Sigmoid colon (tissue), 7 donors: ENCODE measurements at regions of chrX and their contacts with region 1.

Region 1: DNA sequence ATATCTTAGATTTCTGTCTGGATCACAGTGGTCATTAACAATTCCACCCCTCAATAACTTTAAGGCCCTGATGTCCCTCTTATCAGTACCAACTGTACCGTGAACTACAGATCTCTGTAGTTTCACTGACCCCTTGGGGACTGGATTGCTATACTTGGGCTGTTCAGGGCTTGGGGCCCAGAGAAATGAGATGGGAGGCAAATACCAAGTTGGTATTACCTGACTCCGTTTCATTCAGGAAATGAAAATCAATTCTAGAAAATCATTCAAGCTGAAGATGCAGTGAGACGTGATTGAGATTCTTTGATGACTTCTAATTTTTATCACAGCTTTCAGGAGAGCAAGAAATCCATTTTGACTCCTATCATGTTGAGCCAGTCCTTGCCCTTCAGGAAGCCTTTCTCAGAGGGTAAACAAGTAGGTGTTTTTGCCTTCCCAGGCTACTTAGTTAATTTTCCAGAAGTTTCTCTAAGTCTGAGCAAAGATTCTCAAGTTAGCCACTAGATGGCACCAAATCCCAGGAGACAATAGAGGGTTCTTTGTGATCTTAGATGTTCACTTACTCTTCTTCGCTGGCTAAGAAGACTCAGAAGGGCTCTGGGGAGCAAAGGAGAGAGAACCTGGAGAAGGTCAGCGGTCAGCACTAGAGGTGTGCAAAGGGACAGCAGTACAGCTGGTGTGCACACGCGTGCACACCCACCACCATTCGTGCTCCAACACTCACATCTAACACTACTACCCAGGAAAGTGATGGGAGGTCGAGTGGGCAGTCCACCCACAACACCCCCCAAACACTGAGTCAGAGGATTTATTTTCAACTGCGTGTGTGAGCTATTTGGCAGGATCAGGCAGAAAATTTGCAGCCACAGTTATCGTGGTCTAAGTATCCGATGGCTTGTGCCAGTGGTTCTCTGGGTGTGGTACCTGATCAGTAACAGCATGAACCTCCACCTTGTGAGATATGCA is 7.4 kb downstream of the HNRNPH2 start:
- DNase-seq: no peak
- H3K4me3 ChIP-seq: no peak overlapping the region
- H3K27ac ChIP-seq: peak overlapping the region; percentile 50 to 91 (median 88)
- H3K4me1 ChIP-seq: peaks cover 0 to 63% (median 20%) of the 10 kb centered on the region in 4 donors
- H3K27me3 ChIP-seq: no peaks in the 10 kb centered on the region
- CTCF ChIP-seq: peak; percentile 23 to 62 (median 45)
- EP300 ChIP-seq: no peak
- POLR2A ChIP-seq: no peak

Region 2: GRCh38 chrX:100395781-100396180 is 1019.7 kb before region 1 on chrX:
- intact Hi-C with region 1: no loop called
- DNase-seq: no peak
- H3K4me3 ChIP-seq: no peak overlapping the region
- H3K27ac ChIP-seq: no peak overlapping the region
- H3K4me1 ChIP-seq: no peaks in the 10 kb centered on the region
- H3K27me3 ChIP-seq: peaks cover 0 to 3% (median 0%) of the 10 kb centered on the region in 3 donors
- CTCF ChIP-seq: no peak
- EP300 ChIP-seq: no peak
- POLR2A ChIP-seq: no peak

Region 3: DNA sequence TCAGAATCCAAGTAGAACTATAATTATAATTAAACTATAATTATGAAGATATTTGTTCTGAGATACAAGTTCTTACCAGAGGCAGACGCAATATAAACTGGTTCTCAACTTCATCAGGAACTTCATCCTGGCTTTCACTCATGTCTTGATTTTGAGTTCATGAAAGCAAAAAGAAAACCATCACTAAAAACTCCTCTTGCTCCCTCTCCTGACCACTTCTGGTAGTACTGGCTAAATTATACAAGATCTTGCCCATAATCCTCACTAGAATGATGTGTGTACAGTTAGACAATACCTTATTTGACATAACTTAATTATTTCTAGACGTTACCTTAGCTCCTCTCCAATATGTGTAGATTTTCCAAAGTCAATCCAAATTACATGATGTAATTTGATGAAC is 128.1 kb before region 1 on chrX:
- intact Hi-C with region 1: no loop called
- DNase-seq: no peak
- H3K4me3 ChIP-seq: no peak overlapping the region
- H3K27ac ChIP-seq: no peak overlapping the region
- H3K4me1 ChIP-seq: no peaks in the 10 kb centered on the region
- H3K27me3 ChIP-seq: peaks cover 0 to 6% (median 0%) of the 10 kb centered on the region in 3 donors
- CTCF ChIP-seq: peak; percentile 21 to 51 (median 38)
- EP300 ChIP-seq: no peak
- POLR2A ChIP-seq: no peak

Region 4: DNA sequence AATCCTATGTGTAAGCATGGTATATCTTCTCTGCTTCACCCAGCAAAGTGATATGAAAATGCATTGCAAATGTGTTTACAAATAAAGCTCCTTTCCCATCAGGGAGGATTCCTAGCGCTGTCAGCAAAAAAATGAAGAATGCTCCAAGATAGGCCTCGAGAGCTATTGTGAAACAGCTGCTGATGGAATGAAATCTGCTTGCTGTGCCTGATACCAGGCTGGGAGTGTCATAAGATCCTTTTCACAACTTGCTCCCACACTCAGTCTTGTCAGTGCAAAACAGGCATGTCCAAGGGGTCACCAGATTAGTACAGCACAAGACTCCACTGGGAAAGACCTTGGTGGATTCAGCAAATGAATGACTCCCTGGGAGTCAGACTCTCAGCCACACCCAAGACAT is 26.6 kb after region 1 on chrX:
- intact Hi-C with region 1: no loop called
- DNase-seq: no peak
- H3K4me3 ChIP-seq: no peak overlapping the region
- H3K27ac ChIP-seq: no peak overlapping the region
- H3K4me1 ChIP-seq: no peaks in the 10 kb centered on the region
- H3K27me3 ChIP-seq: no peaks in the 10 kb centered on the region
- CTCF ChIP-seq: no peak
- EP300 ChIP-seq: no peak
- POLR2A ChIP-seq: no peak

Region 5: DNA sequence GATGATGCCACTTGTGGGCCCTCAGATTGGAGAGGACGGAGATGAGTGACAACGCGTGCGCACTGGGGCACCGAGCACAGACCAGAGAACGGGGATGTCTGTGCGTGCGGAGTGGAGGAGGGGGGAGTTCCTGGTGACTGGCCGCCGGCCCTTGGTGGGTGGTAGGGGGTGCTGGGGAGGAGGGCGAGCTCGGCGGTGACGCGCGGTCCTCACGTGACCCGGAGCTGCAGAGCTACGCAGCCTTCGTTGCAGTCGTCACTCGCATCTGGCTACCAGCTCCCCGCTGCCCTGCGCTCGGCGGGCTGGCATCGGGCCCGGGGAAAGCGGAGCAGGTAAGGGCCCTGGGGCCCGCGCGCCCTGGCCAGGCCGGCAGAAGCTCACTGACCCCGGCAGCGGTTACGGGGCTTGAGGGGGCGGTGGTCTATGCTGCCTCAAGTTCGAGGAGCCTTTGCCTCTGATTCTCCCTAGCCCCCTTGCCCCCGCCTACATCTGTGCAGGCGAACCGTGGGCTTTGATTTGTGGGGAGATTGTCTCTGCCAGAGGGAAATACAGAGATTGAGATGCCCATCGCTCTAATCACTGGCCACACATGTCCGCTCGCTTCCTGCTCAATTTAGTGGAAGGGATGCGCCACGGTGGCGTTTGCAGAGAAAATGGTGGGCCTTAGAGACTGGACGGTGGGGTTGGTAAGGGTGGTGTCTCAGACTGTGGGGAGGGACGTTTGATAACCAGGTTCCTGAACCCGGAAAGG is 69.9 kb after region 1 on chrX and contains the start of gene ARMCX4:
- intact Hi-C with region 1: loop called (anchors 5 kb)
- DNase-seq: peak; percentile 87
- H3K4me3 ChIP-seq: peak within 1 kb of the TSS; percentile 40 to 54 (median 51)
- H3K27ac ChIP-seq: peak within 1 kb of the TSS; percentile 29 to 64 (median 59)
- H3K4me1 ChIP-seq: no peaks in the 10 kb centered on the region
- H3K27me3 ChIP-seq: peaks cover 0 to 7% (median 0%) of the 10 kb centered on the region in 3 donors
- CTCF ChIP-seq: no peak
- EP300 ChIP-seq: no peak
- POLR2A ChIP-seq: no peak
- total RNA-seq, gene ARMCX4: 9.5 to 26.3 (median 12.4) TPM

Region 6: GRCh38 chrX:101617211-101618191 is 202.0 kb after region 1 on chrX and contains the start of gene ARMCX6:
- intact Hi-C with region 1: loop called (anchors 5 kb)
- DNase-seq: peak; percentile 92
- H3K4me3 ChIP-seq: peak within 1 kb of the TSS; percentile 59 to 62 (median 60)
- H3K27ac ChIP-seq: peak within 1 kb of the TSS; percentile 81 to 85 (median 82)
- H3K4me1 ChIP-seq: peaks cover 0 to 5% (median 4%) of the 10 kb centered on the region in 4 donors
- H3K27me3 ChIP-seq: no peaks in the 10 kb centered on the region
- CTCF ChIP-seq: peak in 2 of 4 experiments; percentile 8 to 29
- EP300 ChIP-seq: no peak
- POLR2A ChIP-seq: no peak
- total RNA-seq, gene ARMCX6: 12.8 to 24.1 (median 18.5) TPM

Region 7: GRCh38 chrX:101799387-101799786 is 383.9 kb after region 1 on chrX:
- intact Hi-C with region 1: loop called (anchors 2 kb)
- DNase-seq: peak; percentile 88
- H3K4me3 ChIP-seq: peak overlapping the region in 2 of 4 donors; percentile 27 to 29
- H3K27ac ChIP-seq: no peak overlapping the region
- H3K4me1 ChIP-seq: no peaks in the 10 kb centered on the region
- H3K27me3 ChIP-seq: no peaks in the 10 kb centered on the region
- CTCF ChIP-seq: peak; percentile 31 to 63 (median 52)
- EP300 ChIP-seq: no peak
- POLR2A ChIP-seq: no peak

Region 8: GRCh38 chrX:103356130-103356798 is 1940.8 kb after region 1 on chrX and contains the start of gene TCEAL9:
- intact Hi-C with region 1: loop called (anchors 5 kb)
- DNase-seq: peak; percentile 87
- H3K4me3 ChIP-seq: peak within 1 kb of the TSS; percentile 60 to 66 (median 64)
- H3K27ac ChIP-seq: peak within 1 kb of the TSS; percentile 79 to 89 (median 88)
- H3K4me1 ChIP-seq: peaks cover 0 to 4% (median 0%) of the 10 kb centered on the region in 4 donors
- H3K27me3 ChIP-seq: no peaks in the 10 kb centered on the region
- CTCF ChIP-seq: no peak
- EP300 ChIP-seq: no peak
- POLR2A ChIP-seq: peak; percentile 79 to 82
- total RNA-seq, gene TCEAL9: 58.9 to 81.1 (median 74.9) TPM